Activated T-helper 1 cell treated with anti-CD3 and anti-CD28 coated beads, Interleukin-12 subunit alpha, Interleukin-12 subunit beta, Interleukin-2, Interleukin-4 antibody, amounts not matched to agents 30 ng/mL and 10 ng/mL and 1 ng/mL, durations not matched to agents 14 hours and 24 hours and 36 hours (primary cell): ENCODE measurements at regions of chr22 and their contacts with region 1.

Region 1: GRCh38 chr22:29245637-29246385 is 22.0 kb downstream of the RHBDD3 start:
- DNase-seq: peak; percentile 55
- H3K4me3 Mint-ChIP-seq: no peak overlapping the region
- H3K27ac Mint-ChIP-seq: no peak overlapping the region
- H3K4me1 Mint-ChIP-seq: no peaks in the 10 kb centered on the region
- H3K27me3 Mint-ChIP-seq: peaks cover 14% of the 10 kb centered on the region

Region 2: GRCh38 chr22:28600546-28601143 is 645.2 kb before region 1 on chr22:
- intact Hi-C with region 1: loop called (anchors 1 kb)
- DNase-seq: no peak
- H3K4me3 Mint-ChIP-seq: no peak overlapping the region
- H3K27ac Mint-ChIP-seq: no peak overlapping the region
- H3K4me1 Mint-ChIP-seq: no peaks in the 10 kb centered on the region
- H3K27me3 Mint-ChIP-seq: peaks cover 36% of the 10 kb centered on the region

Region 3: GRCh38 chr22:28855355-28856094 is 390.3 kb before region 1 on chr22:
- intact Hi-C with region 1: loop called (anchors 1 kb)
- DNase-seq: peak; percentile 11
- H3K4me3 Mint-ChIP-seq: no peak overlapping the region
- H3K27ac Mint-ChIP-seq: no peak overlapping the region
- H3K4me1 Mint-ChIP-seq: no peaks in the 10 kb centered on the region
- H3K27me3 Mint-ChIP-seq: peaks cover 8% of the 10 kb centered on the region

Region 4: DNA sequence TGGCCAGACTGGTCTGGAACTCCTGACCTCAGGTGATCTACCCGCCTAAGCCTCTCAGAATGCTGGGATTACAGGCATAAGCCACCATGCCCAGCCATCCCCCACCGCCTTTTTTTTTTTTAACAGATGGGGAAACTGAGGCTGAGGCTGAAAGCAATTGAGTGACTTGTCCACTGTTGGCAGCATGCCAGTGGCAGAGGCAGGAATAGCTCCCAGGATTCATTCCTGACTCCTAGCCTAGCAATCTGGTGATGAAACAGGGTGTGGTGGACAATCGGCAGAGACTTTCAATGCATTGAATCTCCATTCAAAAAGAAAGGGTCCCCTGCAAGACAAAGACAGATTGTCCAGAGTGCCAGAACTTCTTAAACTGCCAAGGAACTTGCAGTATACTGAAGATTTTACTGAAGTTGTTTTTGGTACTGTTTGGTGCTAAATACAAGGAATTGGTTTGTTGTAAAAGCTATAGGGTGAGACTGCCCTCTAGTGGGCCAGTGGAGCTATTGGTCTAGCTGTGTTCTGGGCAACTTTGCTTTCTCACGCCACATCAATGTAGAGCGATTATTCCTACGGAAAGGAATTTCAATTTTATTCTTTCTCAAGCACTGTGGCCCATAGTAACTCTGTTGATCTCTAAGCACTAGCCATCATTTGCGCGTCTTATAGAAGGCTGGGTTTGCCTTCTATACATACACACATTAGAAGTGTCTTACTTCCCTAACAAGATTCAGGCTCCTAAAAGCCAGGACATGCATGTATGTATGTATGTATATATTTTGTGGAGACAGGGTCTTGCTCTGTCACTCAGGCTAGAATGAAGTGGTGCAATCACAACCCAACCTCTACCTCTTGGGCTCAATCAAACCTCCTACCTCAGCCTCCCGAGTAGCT is 205.2 kb before region 1 on chr22:
- intact Hi-C with region 1: loop called (anchors 1 kb)
- DNase-seq: peak; percentile 44
- H3K4me3 Mint-ChIP-seq: no peak overlapping the region
- H3K27ac Mint-ChIP-seq: no peak overlapping the region
- H3K4me1 Mint-ChIP-seq: no peaks in the 10 kb centered on the region
- H3K27me3 Mint-ChIP-seq: peaks cover 12% of the 10 kb centered on the region

Region 5: DNA sequence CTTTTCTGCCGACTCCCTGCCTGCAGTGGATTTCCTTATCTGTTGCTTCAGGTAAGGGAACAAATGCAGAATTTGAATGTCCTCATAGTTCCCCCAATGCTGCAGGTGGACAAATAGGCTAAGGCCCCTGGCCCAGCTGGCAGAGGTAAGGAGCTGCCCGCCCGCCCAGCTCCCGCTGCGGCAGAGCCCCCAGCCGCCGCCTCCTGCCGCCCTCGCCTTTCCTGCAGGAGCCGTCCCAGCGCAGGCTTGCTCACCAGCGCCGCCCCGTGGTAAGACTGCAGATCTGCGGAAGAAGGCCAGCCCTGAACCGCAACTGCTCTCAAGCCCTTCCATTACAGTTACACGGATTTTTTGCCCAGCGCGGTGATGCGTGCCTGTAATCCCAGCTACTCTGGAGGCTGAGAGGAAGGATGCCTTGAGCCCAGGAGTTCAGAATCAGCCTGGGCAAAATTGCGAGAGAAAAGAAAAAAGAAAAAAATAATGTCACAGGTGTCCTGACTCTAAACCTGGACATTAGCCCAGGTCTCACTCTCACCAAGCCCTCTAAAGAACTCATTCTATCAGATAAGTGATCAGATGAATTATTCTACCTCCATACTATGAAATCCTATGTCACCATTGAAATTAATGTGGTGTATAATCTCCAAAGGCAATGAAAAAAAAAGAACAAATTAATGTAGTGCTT is 91.3 kb before region 1 on chr22:
- intact Hi-C with region 1: loop called (anchors 1 kb)
- DNase-seq: peak; percentile 64
- H3K4me3 Mint-ChIP-seq: no peak overlapping the region
- H3K27ac Mint-ChIP-seq: no peak overlapping the region
- H3K4me1 Mint-ChIP-seq: peaks cover 8% of the 10 kb centered on the region
- H3K27me3 Mint-ChIP-seq: peaks cover 21% of the 10 kb centered on the region

Region 6: DNA sequence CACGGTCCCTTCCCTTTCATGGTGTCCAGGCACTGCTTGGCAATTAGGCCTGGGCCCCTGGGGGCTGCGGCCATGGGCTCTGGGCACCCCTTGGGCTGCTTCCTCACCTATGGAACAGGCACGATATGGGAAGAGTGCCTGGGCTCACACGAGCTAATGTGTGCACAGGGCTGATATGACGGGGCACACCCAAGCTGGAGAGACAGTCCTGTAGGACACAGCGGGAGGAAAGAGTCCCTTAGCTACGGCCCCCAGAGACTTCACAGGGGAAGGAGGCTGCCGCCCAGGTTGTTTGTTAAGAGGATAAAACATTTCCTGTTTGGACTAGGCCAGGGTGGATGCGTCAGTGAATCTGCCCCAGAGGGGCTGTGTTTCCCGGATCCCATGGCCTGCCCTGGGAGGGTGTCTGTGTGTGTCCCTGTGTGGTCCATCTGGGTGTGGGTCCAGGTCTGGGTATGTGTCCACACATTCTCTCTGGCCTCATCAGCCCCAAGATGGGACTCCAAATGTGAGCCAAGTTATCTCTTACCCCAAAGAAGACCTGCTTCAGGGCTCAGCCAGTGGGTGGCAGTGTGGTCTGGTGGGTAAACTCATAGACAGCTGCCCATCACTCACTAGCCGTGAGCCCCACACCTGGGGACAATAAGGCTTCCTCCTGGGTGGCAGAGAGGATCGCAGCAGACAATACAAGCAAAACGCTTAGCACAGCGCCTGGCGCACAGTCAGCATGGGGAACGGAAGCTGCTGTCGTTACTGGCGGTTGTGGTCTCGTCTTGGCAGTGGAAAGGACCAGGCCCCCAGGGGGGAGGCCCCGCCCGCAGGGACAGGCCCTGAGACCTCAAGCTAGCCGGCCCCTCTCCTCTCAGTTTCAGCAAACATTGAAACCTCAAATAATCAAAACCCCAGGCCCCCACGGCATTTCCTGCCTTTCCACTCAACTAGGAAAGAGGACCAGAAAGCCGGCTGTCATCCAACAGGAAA is 43.3 kb before region 1 on chr22:
- intact Hi-C with region 1: loop called (anchors 1 kb)
- DNase-seq: peak; percentile 35
- H3K4me3 Mint-ChIP-seq: peak overlapping the region; percentile 45
- H3K27ac Mint-ChIP-seq: peak overlapping the region; percentile 58
- H3K4me1 Mint-ChIP-seq: peaks cover 19% of the 10 kb centered on the region
- H3K27me3 Mint-ChIP-seq: peaks cover 37% of the 10 kb centered on the region